Caco-2 (cell line): ENCODE measurements at regions of chr3 and their contacts with region 1.

Region 1: GRCh38 chr3:193842029-193842798 is 249.2 kb downstream of the OPA1 start:
- DNase-seq: peak in 1 of 2 experiments; percentile 48
- H3K4me3 ChIP-seq: peak overlapping the region; percentile 37
- H3K4me3 Mint-ChIP-seq: peak overlapping the region; percentile 73
- H3K27ac Mint-ChIP-seq: peak overlapping the region; percentile 92
- H3K4me1 ChIP-seq: peaks cover 77% of the 10 kb centered on the region
- H3K4me1 Mint-ChIP-seq: peaks cover 50% of the 10 kb centered on the region
- H3K27me3 ChIP-seq: no peaks in the 10 kb centered on the region
- H3K27me3 Mint-ChIP-seq: no peaks in the 10 kb centered on the region
- CTCF ChIP-seq: no peak

Region 2: DNA sequence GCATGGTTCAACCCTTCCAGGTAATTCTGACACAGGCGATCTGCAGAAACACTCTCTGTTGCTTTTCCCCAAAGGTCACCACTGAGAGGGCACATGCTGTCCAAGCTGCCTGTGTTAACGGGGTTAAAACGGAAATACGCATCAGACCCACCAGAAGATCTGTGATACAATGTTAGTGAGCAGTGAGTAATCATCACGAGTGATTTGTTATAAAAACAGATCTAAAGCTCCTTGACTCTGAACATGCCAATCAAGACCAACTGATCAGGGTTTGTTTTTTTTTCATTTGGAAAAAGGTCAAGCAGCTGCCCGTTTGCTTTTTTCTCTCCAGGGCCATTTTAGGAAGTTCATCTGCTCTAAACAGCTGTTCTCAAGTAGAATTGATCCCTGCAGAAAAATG is 1158.1 kb before region 1 on chr3:
- CTCF ChIA-PET with region 1: no interaction called
- POLR2A ChIA-PET with region 1: no interaction called
- intact Hi-C with region 1: no loop called
- DNase-seq: no peak
- H3K4me3 ChIP-seq: no peak overlapping the region
- H3K4me3 Mint-ChIP-seq: no peak overlapping the region
- H3K27ac Mint-ChIP-seq: no peak overlapping the region
- H3K4me1 ChIP-seq: no peaks in the 10 kb centered on the region
- H3K4me1 Mint-ChIP-seq: no peaks in the 10 kb centered on the region
- H3K27me3 ChIP-seq: no peaks in the 10 kb centered on the region
- H3K27me3 Mint-ChIP-seq: peaks cover 7% of the 10 kb centered on the region
- CTCF ChIP-seq: no peak

Region 3: DNA sequence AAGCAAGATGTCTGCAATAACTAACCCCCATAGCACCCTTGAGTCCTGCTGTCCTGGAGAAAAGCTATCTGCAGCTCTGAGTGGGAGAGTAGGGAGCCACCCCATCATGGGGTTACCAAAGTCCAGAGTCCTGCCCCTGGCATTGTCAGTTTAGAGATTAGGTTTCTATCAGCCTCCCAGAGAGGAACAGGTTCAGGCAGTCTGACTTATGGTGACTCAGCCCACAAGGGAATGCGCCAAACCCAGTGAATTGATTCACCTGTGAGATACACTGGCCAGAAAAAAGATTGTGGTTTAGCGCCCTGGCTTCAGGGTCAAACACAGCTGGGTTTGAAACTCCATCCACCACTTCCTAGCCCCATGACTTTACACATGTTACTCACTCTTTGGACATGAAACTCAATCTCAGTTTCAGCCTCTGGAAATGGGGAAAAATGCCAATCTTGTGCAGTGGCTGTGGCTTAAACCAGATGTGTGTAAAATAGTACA is 30.1 kb after region 1 on chr3:
- CTCF ChIA-PET with region 1: interaction called, 4 read pairs
- POLR2A ChIA-PET with region 1: interaction called, 8 read pairs
- intact Hi-C with region 1: loop called (anchors 1 kb)
- DNase-seq: peak; percentile 91 to 94
- H3K4me3 ChIP-seq: no peak overlapping the region
- H3K4me3 Mint-ChIP-seq: peak overlapping the region; percentile 50
- H3K27ac Mint-ChIP-seq: peak overlapping the region; percentile 88
- H3K4me1 ChIP-seq: peaks cover 83% of the 10 kb centered on the region
- H3K4me1 Mint-ChIP-seq: peaks cover 74% of the 10 kb centered on the region
- H3K27me3 ChIP-seq: no peaks in the 10 kb centered on the region
- H3K27me3 Mint-ChIP-seq: no peaks in the 10 kb centered on the region
- CTCF ChIP-seq: no peak

Region 4: GRCh38 chr3:194070634-194071409 is 228.6 kb after region 1 on chr3:
- CTCF ChIA-PET with region 1: no interaction called
- POLR2A ChIA-PET with region 1: interaction called, 5 read pairs
- intact Hi-C with region 1: loop called (anchors 5 kb)
- DNase-seq: peak; percentile 87 to 89
- H3K4me3 ChIP-seq: peak overlapping the region; percentile 52
- H3K4me3 Mint-ChIP-seq: peak overlapping the region; percentile 88
- H3K27ac Mint-ChIP-seq: peak overlapping the region; percentile 94
- H3K4me1 ChIP-seq: peaks cover 44% of the 10 kb centered on the region
- H3K4me1 Mint-ChIP-seq: peaks cover 33% of the 10 kb centered on the region
- H3K27me3 ChIP-seq: no peaks in the 10 kb centered on the region
- H3K27me3 Mint-ChIP-seq: no peaks in the 10 kb centered on the region
- CTCF ChIP-seq: no peak

Region 5: DNA sequence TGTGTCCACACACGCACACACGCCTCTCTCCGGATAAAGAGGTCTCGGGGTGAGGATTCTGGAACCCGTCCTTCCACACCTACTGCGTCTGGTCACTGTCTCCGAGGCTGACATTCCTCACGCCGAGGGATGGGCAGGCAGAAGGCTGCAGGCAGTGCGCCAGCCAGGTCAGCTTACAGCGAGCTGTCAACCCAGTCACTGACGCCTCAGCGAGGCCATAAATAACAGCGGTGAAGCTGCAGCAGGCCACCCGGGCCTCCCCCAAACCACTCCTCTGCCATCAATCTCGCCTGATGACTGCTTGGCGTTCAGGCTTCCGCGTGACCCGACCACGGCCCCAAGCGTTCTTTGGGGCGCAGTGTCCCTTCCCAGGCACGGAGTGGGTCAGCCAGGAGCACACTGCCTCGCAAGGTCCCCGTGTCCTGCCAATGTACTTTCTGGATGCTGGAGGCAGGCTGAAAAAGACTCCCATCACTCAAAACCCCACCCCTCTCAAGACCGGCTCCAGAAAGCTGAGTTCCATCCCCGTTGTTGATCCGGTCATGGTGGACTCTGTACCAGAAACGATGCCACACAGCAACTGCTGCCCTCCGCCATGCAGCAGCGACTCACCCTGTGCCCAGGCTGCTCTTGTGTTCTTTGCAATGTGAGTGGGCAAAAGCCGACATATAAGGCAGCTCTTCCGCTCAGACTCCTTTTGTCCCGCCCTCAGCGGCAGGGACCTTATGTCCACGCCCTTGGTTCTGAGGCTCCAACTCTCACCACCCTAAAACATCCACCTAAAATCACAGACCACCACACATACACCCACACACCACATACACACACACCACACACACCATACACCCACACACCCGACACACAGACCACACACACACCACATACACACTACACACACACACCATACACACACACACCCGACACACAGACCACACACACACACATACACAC is 481.8 kb after region 1 on chr3:
- CTCF ChIA-PET with region 1: no interaction called
- POLR2A ChIA-PET with region 1: no interaction called
- intact Hi-C with region 1: loop called (anchors 5 kb)
- DNase-seq: peak; percentile 36 to 81
- H3K4me3 ChIP-seq: no peak overlapping the region
- H3K4me3 Mint-ChIP-seq: peak overlapping the region; percentile 75
- H3K27ac Mint-ChIP-seq: no peak overlapping the region
- H3K4me1 ChIP-seq: peaks cover 49% of the 10 kb centered on the region
- H3K4me1 Mint-ChIP-seq: peaks cover 37% of the 10 kb centered on the region
- H3K27me3 ChIP-seq: no peaks in the 10 kb centered on the region
- H3K27me3 Mint-ChIP-seq: no peaks in the 10 kb centered on the region
- CTCF ChIP-seq: no peak